Activated CD8-positive, alpha-beta T cell treated with anti-CD3 and anti-CD28 coated beads for 36 hours (primary cell): ENCODE measurements at regions of chrX and their contacts with region 1.

Region 1: GRCh38 chrX:48897621-48898306 is at the starts of genes PQBP1 and TIMM17B:
- DNase-seq: peak; percentile 91
- ATAC-seq: peak; percentile 91
- H3K4me3 Mint-ChIP-seq: peak within 1 kb of the TSS; percentile 84
- H3K27ac Mint-ChIP-seq: peak within 1 kb of the TSS; percentile 96
- H3K4me1 Mint-ChIP-seq: peaks cover 28% of the 10 kb centered on the region
- H3K27me3 Mint-ChIP-seq: no peaks in the 10 kb centered on the region
- CTCF ChIP-seq: no peak
- total RNA-seq, gene PQBP1: 63.9 to 66.5 TPM
- total RNA-seq, gene TIMM17B: 50.1 to 52.2 TPM

Region 2: GRCh38 chrX:48911412-48912182 is 13.8 kb after region 1 on chrX and contains the start of gene SLC35A2:
- CTCF ChIA-PET with region 1: interaction called, 4 read pairs
- POLR2A ChIA-PET with region 1: interaction called, 12 read pairs
- intact Hi-C with region 1: no loop called
- DNase-seq: peak; percentile 90
- ATAC-seq: peak; percentile 79
- H3K4me3 Mint-ChIP-seq: peak within 1 kb of the TSS; percentile 96
- H3K27ac Mint-ChIP-seq: peak within 1 kb of the TSS; percentile 98
- H3K4me1 Mint-ChIP-seq: peaks cover 36% of the 10 kb centered on the region
- H3K27me3 Mint-ChIP-seq: no peaks in the 10 kb centered on the region
- CTCF ChIP-seq: no peak
- total RNA-seq, gene SLC35A2: 14.7 to 15.0 TPM